Right ventricle myocardium inferior (tissue), 1 donor: ENCODE measurements at regions of chr6 and their contacts with region 1.

Region 1: GRCh38 chr6:136684466-136684865 is 107.8 kb downstream of the MAP3K5 start:
- DNase-seq: no peak
- ATAC-seq: peak; percentile 60

Region 2: DNA sequence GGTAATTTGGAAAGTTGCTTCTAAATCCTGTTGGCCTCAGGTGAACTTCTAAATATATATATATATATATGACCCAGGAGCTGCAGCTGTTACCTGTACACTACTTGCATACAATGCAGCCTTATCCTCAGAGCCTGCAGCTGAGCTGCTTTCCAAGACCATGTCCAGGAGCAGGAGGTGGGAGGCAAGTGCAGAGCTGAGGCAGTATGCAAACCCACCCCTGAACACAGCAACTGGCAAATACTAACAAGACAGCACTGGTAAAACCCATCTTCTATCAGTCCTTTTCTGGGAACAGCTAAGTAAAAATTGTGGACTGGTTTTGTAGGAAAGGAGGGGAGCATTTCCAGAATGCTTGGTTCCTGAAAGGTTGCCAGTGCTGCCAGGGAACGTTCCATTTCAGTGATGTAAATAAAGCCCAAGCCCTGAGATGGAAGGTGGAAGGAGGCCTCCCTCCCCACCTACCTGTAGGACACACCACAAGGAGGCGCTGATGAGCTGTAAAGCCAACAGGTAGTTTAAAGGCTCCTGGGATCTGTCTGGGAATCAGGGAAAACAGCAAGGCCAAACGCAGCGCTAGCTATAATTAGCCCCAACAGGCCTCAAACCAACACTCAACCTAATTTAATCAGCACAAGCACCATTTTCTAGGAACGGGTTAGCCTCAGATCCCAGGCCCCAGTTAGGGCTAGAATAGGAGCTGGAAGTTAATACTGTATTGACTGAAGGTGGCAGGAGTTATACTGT is 40.4 kb before region 1 on chr6:
- intact Hi-C with region 1: loop called (anchors 5 kb)
- DNase-seq: peak; percentile 88
- ATAC-seq: peak; percentile 95